Adrenal gland (tissue), 19 donors: ENCODE measurements at regions of chr9 and their contacts with region 1.

Region 1: DNA sequence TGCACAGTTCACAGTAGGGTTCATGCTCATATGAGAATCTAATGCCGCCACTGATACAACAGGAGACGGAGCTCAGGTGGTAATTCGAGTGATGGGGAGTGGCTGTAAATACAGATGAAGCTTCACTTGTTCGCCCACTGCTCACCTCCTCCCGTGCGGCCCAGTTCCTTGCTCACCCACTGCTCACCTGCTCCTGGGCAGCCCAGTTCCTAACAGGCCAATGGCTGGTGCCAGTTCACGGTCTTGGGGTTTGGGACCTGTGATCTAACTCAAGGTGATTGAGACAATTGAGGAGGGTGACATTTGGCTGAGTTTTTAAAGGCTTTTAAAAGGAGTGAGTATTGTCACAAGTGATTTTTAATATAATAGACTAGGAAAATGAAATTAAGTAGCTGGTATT is 45.4 kb downstream of the RAD23B start:
- DNase-seq: no peak
- H3K4me3 ChIP-seq: no peak overlapping the region
- H3K27ac ChIP-seq: no peak overlapping the region
- H3K4me1 ChIP-seq: peaks cover 0 to 11% of the 10 kb centered on the region in 2 donors
- H3K27me3 ChIP-seq: no peaks in the 10 kb centered on the region
- CTCF ChIP-seq: no peak
- POLR2A ChIP-seq: no peak

Region 2: GRCh38 chr9:107227781-107228195 is 100.7 kb before region 1 on chr9:
- intact Hi-C with region 1: loop called in 1 of 2 experiments (anchors 5 kb)
- DNase-seq: no peak
- H3K4me3 ChIP-seq: no peak overlapping the region
- H3K27ac ChIP-seq: no peak overlapping the region
- H3K4me1 ChIP-seq: no peaks in the 10 kb centered on the region
- H3K27me3 ChIP-seq: no peaks in the 10 kb centered on the region
- CTCF ChIP-seq: no peak
- POLR2A ChIP-seq: no peak

Region 3: GRCh38 chr9:107274096-107274495 is 54.4 kb before region 1 on chr9:
- intact Hi-C with region 1: no loop called
- DNase-seq: no peak
- H3K4me3 ChIP-seq: no peak overlapping the region
- H3K27ac ChIP-seq: no peak overlapping the region
- H3K4me1 ChIP-seq: no peaks in the 10 kb centered on the region
- H3K27me3 ChIP-seq: peaks cover 4% of the 10 kb centered on the region
- CTCF ChIP-seq: no peak
- POLR2A ChIP-seq: no peak